RWPE1 (cell line): ENCODE measurements at regions of chr17 and their contacts with region 1.

Region 1: DNA sequence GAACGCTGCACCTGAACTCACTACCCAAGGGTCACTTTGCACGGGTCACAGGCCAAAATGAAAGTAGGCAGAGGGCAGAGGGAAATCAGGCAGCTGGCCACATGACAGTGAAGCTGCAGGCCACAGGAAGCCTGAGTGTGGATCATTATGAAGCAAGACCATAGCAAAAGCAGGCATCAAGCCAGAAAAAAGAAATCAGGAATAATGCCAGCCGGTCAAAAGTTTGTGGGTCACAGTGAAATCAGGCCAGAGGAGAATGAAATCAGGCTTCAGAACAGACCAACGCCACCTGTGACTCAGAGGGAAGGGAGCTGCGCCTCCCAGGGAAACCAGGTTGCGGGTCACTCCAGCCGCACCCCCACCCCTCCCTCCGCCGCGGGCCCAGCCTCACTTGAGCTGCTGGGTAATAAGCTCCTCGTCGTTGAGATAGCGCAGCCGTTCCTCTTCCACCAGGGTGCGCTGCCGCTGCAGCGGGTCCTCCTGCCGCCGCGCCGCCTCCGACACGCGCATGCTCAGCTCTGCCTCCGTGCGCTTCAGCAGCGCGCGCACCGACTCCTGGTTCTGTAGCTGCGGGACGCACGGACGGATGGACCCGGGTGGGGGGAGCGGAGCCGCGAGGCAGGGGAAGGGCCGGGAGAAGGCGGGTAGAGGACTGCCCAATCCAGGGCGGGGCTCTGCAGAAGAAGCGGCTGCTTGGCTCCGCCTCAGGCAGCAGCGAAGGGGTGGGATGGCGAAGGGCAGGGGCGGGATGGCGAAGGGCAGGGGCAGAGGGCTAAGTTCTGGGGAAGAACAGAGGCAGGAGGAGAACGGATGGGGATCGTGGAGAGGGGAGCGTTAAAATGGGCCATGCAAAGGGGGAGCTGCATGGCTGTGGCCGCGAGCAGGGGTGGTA is 47.7 kb downstream of the SRCIN1 start:
- DNase-seq: peak; percentile 95
- H3K27ac ChIP-seq: peak overlapping the region; percentile 90
- CTCF ChIP-seq: peak; percentile 97

Region 2: DNA sequence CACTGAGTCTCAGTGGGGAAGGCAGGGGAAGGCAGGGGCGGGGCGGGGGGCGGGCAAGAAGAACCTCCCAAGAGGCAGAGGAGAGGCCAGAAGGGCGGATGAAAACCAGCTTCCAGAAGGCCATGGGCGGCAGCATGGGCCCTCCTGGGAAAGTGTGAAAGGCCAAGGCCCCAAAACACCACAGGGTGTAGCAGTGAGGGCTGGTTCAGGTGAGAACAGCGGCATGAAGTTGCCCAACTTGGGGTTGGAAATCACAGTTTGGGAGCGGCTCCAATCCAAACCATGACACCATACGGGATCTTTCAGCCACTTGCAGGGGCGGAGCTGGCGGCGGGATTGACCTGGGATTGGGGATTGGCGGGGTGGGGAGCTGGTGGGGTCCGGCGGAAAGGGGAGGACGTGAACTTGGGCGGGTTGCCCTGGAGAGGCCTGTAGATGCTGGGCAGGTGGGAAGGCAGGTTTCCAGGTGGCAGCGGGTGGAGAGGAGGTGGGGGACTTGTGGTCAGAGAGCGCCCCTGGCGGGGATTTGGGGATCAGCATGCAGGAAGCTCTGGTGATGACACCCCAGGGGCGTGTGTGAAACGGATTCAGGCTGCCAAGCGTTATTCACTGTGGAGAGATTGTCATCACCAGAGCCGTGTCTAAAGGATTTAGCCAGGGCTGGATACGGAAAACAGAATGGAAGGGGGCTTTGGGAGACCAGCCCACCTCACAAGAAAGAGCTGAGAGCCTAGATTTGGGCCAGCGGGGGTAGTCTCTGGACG is 48.9 kb before region 1 on chr17:
- CTCF ChIA-PET with region 1: interaction called, 14 read pairs
- POLR2A ChIA-PET with region 1: interaction called, 3 read pairs
- DNase-seq: peak; percentile 90
- H3K27ac ChIP-seq: peak overlapping the region; percentile 59
- CTCF ChIP-seq: peak; percentile 71

Region 3: GRCh38 chr17:38578229-38579082 is 20.4 kb after region 1 on chr17:
- CTCF ChIA-PET with region 1: interaction called, 18 read pairs
- POLR2A ChIA-PET with region 1: no interaction called
- DNase-seq: no peak
- H3K27ac ChIP-seq: no peak overlapping the region
- CTCF ChIP-seq: no peak

Region 4: GRCh38 chr17:38584350-38584925 is 26.4 kb after region 1 on chr17:
- CTCF ChIA-PET with region 1: interaction called, 18 read pairs
- POLR2A ChIA-PET with region 1: no interaction called
- DNase-seq: peak; percentile 84
- H3K27ac ChIP-seq: no peak overlapping the region
- CTCF ChIP-seq: peak; percentile 95

Region 5: GRCh38 chr17:38667099-38667786 is 109.2 kb after region 1 on chr17:
- CTCF ChIA-PET with region 1: interaction called, 18 read pairs
- POLR2A ChIA-PET with region 1: no interaction called
- DNase-seq: peak; percentile 77
- H3K27ac ChIP-seq: no peak overlapping the region
- CTCF ChIP-seq: peak; percentile 99